CD8-positive, alpha-beta T cell (primary cell): ENCODE measurements at regions of chr2 and their contacts with region 1.

Region 1: DNA sequence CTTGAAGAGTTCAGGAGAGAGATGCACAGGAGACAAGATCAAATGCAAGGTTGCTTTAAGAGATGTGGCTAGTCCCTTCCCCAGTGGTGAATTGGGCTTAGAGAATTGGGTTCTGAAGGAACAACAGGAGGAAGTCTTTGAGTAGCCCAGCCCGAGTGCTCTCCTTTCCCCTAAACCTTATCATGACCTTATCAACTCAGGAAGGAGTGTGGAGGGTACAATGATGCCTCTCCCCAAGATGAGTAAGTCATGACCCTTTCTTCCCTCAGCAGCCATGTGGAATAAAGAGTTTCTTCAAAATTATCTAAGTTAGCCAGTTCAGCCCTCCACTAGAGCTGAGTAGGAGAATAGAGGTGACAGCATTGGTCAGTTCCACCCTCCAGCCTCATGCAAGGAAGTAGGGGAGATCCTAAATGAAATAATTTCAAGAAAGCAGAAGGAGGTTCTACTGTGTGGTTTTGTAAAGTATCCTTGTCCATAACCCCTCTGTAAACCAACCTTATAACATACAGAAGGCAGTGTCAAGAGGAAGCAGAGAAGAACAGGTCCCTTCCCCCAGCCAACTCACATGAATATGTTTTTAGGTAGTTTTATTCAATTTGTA is 88.4 kb downstream of the ARHGAP15 start:
- DNase-seq: no peak
- ATAC-seq: no peak
- H3K4me3 ChIP-seq: no peak overlapping the region
- H3K4me3 Mint-ChIP-seq: no peak overlapping the region
- H3K27ac ChIP-seq: peak overlapping the region in 1 of 2 experiments; percentile 36
- H3K27ac Mint-ChIP-seq: peak overlapping the region; percentile 79
- H3K4me1 ChIP-seq: peaks cover 7% of the 10 kb centered on the region
- H3K4me1 Mint-ChIP-seq: peaks cover 54% of the 10 kb centered on the region
- H3K27me3 ChIP-seq: no peaks in the 10 kb centered on the region
- H3K27me3 Mint-ChIP-seq: no peaks in the 10 kb centered on the region
- CTCF ChIP-seq: no peak

Region 2: DNA sequence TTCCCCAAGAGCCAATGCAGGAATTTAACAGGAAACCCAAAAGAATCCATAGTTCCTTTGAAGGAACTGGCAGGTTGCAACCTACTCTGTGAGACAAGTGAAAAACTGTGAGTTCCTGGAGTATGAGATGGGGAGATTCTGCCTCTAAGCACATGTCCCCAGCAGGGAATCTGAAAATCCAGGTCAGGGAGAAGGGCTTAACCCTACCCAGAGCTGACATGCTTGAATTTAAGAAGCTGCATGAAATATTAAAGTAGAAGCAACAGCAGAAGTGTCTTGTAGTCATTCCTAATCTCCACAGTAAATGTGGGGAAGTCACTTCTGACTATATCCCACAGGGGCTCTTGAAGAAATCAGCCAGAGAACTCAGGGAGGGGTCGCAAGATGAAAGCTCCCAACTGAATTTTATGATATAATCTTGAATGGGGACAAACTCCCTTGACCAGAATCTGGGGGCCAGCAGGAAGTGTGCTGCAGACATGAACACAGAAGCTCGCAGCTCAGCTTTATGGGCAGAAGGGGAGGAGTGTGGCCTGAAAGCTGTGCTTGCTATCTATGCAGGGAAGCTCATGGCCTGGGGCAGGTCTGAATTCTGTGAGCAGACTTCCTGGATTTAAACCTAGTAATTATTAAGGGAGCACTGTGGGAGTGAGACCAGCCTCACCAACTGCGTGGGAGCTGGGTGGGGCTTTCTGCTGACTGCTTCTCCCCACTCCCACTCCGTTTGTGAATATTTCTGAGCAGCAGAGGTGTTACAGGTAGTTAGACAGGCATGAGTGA is 524.3 kb before region 1 on chr2:
- CTCF ChIA-PET with region 1: no interaction called
- POLR2A ChIA-PET with region 1: no interaction called
- intact Hi-C with region 1: no loop called
- DNase-seq: no peak
- ATAC-seq: no peak
- H3K4me3 ChIP-seq: no peak overlapping the region
- H3K4me3 Mint-ChIP-seq: no peak overlapping the region
- H3K27ac ChIP-seq: no peak overlapping the region
- H3K27ac Mint-ChIP-seq: no peak overlapping the region
- H3K4me1 ChIP-seq: no peaks in the 10 kb centered on the region
- H3K4me1 Mint-ChIP-seq: no peaks in the 10 kb centered on the region
- H3K27me3 ChIP-seq: no peaks in the 10 kb centered on the region
- H3K27me3 Mint-ChIP-seq: no peaks in the 10 kb centered on the region
- CTCF ChIP-seq: no peak

Region 3: DNA sequence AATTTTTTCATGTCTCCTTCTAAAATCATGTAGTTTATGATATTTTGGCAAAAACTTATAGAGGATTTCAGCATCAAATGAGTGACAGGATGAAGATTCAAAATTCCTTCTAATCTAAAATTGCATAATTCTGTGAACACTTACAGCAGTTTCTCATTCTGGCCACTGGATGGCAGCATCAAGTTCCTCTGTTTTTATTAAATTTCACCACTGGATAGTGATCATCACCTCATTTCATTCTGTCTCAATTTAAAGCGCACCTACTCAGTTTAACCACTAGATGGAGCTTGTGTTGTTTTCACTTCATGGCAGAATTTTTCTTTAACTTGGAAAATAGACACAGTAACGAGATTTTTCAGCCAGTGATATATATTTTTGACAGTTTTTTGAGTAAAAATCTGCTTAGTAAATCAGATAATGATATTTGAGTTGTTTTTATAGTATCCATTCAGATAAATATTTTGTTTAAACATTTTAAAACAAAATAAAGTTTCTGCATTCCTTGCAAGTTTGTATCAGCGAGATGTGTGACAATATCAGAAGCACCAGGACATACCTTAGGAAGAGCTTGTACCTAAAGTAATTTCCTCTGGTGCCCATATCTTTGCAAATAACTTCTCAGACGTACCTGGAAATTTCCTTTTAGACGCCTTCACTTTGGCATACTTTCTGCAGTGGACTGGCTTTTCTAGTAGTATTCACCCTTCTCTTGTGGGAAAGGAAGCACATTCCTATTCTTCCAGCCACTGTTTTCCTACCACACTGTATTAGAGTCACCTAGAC is 183.1 kb before region 1 on chr2:
- CTCF ChIA-PET with region 1: no interaction called
- POLR2A ChIA-PET with region 1: no interaction called
- intact Hi-C with region 1: loop called (anchors 1 kb)
- DNase-seq: peak in 8 of 9 experiments; percentile 32 to 88 (median 56)
- ATAC-seq: peak; percentile 100
- H3K4me3 ChIP-seq: no peak overlapping the region
- H3K4me3 Mint-ChIP-seq: no peak overlapping the region
- H3K27ac ChIP-seq: no peak overlapping the region
- H3K27ac Mint-ChIP-seq: no peak overlapping the region
- H3K4me1 ChIP-seq: no peaks in the 10 kb centered on the region
- H3K4me1 Mint-ChIP-seq: no peaks in the 10 kb centered on the region
- H3K27me3 ChIP-seq: no peaks in the 10 kb centered on the region
- H3K27me3 Mint-ChIP-seq: peaks cover 6% of the 10 kb centered on the region
- CTCF ChIP-seq: peak; percentile 99

Region 4: GRCh38 chr2:143241403-143242088 is 23.9 kb after region 1 on chr2:
- CTCF ChIA-PET with region 1: no interaction called
- POLR2A ChIA-PET with region 1: no interaction called
- intact Hi-C with region 1: loop called in 1 of 2 experiments (anchors 2 kb)
- DNase-seq: no peak
- ATAC-seq: no peak
- H3K4me3 ChIP-seq: no peak overlapping the region
- H3K4me3 Mint-ChIP-seq: no peak overlapping the region
- H3K27ac ChIP-seq: no peak overlapping the region
- H3K27ac Mint-ChIP-seq: peak overlapping the region; percentile 34
- H3K4me1 ChIP-seq: peaks cover 11% of the 10 kb centered on the region
- H3K4me1 Mint-ChIP-seq: peaks cover 30% of the 10 kb centered on the region
- H3K27me3 ChIP-seq: no peaks in the 10 kb centered on the region
- H3K27me3 Mint-ChIP-seq: no peaks in the 10 kb centered on the region
- CTCF ChIP-seq: no peak